GM13977 (cell line): ENCODE measurements at regions of chr2 and their contacts with region 1.

Region 1: GRCh38 chr2:54522624-54523281 is 66.6 kb downstream of the SPTBN1 start:
- DNase-seq: peak; percentile 63
- CTCF ChIP-seq: peak; percentile 71

Region 2: GRCh38 chr2:54704688-54705605 is 182.2 kb after region 1 on chr2:
- in situ Hi-C with region 1: loop called (anchors 10 kb)
- DNase-seq: peak; percentile 60
- CTCF ChIP-seq: peak; percentile 55

Region 3: GRCh38 chr2:54838585-54839035 is 315.9 kb after region 1 on chr2:
- in situ Hi-C with region 1: loop called (anchors 25 kb)
- DNase-seq: peak; percentile 57
- CTCF ChIP-seq: peak; percentile 82